ENCODE measurements at regions of chr9 and their contacts with region 1.

Region 1: GRCh38 chr9:125631391-125632085 is 75.5 kb downstream of the MAPKAP1 start:
- DNase-seq: no peak
- H3K4me3 Mint-ChIP-seq: peak overlapping the region; percentile 11
- H3K27ac Mint-ChIP-seq: peak overlapping the region; percentile 40
- H3K4me1 Mint-ChIP-seq: peaks cover 57% of the 10 kb centered on the region
- H3K27me3 Mint-ChIP-seq: no peaks in the 10 kb centered on the region

Region 2: DNA sequence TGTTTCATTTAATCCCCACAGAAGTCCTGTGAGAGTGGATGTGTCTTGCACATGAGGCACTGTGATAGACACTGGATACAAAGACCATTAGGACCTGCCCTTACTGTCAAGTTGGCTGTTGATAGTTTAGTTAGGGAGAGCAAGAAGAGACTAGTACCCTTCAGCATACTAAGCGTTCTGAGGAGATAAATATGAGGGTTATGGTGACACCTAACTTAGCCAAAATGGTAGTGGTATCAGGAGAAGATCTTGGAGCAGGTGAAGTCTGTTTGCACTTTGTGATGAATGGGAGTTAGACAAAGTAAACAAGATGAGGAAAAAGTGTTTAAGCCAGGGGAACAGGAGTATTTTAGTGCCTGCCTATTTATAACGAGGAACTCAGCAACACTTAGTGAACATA is 322.9 kb before region 1 on chr9:
- intact Hi-C with region 1: no loop called
- DNase-seq: no peak
- H3K4me3 Mint-ChIP-seq: no peak overlapping the region
- H3K27ac Mint-ChIP-seq: no peak overlapping the region
- H3K4me1 Mint-ChIP-seq: no peaks in the 10 kb centered on the region
- H3K27me3 Mint-ChIP-seq: no peaks in the 10 kb centered on the region

Region 3: GRCh38 chr9:125521462-125522327 is 109.8 kb before region 1 on chr9:
- intact Hi-C with region 1: loop called (anchors 1 kb)
- DNase-seq: peak; percentile 24
- H3K4me3 Mint-ChIP-seq: peak overlapping the region; percentile 51
- H3K27ac Mint-ChIP-seq: peak overlapping the region; percentile 91
- H3K4me1 Mint-ChIP-seq: peaks cover 50% of the 10 kb centered on the region
- H3K27me3 Mint-ChIP-seq: no peaks in the 10 kb centered on the region

Region 4: DNA sequence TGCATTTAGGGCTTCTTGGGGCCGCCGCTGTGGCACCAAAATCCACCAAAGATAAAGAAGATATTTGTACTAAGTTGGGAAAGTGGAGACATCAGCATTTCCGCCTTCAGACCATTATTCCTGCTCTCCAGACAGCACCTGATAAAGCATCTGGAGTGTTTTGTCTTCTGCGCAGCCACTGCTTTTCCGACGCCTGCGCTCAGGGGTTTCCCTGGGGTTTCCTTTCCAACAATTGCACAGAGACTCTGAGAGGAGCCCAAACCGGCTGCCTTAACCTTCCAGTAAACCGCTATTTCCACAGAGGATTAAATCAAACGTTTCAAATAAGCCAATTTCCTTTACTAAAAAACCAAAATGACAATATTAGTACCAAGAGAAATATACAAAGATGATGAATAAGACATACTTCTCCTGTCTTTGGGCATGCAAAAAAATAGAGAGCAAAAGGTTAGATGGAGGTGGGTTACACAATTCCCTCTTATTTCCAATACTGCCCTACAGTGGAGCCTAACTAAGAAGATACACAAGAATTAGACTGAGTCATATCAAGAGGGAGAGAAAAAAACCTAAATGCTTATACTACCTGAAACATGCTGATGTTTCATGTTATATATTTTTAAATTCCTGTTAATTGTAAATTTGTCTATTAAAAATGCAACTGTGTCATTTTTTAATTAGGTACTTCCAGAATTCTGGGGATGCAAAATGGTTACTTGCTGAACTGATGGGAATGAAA is 22.9 kb before region 1 on chr9:
- intact Hi-C with region 1: loop called (anchors 1 kb)
- DNase-seq: no peak
- H3K4me3 Mint-ChIP-seq: no peak overlapping the region
- H3K27ac Mint-ChIP-seq: peak overlapping the region; percentile 74
- H3K4me1 Mint-ChIP-seq: peaks cover 41% of the 10 kb centered on the region
- H3K27me3 Mint-ChIP-seq: no peaks in the 10 kb centered on the region

Region 5: DNA sequence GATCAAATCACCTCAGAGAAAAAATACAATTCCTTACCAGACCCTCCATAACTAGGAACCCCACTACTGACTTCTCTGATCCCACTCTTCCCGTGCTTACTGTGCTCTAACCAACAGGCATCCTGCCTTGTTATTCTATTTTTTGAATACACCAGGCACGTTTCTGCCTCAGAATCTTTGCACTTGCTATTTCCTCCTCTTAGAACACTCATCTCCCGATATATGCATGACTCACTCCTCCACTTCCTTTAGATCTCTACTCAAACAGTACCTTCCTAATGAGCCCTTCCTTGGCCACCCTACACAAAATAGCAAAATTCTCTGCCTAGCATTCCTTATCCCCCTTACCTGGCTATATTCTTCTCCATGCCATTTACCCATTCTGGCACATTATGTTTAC is 31.6 kb after region 1 on chr9:
- intact Hi-C with region 1: loop called (anchors 1 kb)
- DNase-seq: no peak
- H3K4me3 Mint-ChIP-seq: no peak overlapping the region
- H3K27ac Mint-ChIP-seq: no peak overlapping the region
- H3K4me1 Mint-ChIP-seq: peaks cover 11% of the 10 kb centered on the region
- H3K27me3 Mint-ChIP-seq: no peaks in the 10 kb centered on the region

Region 6: DNA sequence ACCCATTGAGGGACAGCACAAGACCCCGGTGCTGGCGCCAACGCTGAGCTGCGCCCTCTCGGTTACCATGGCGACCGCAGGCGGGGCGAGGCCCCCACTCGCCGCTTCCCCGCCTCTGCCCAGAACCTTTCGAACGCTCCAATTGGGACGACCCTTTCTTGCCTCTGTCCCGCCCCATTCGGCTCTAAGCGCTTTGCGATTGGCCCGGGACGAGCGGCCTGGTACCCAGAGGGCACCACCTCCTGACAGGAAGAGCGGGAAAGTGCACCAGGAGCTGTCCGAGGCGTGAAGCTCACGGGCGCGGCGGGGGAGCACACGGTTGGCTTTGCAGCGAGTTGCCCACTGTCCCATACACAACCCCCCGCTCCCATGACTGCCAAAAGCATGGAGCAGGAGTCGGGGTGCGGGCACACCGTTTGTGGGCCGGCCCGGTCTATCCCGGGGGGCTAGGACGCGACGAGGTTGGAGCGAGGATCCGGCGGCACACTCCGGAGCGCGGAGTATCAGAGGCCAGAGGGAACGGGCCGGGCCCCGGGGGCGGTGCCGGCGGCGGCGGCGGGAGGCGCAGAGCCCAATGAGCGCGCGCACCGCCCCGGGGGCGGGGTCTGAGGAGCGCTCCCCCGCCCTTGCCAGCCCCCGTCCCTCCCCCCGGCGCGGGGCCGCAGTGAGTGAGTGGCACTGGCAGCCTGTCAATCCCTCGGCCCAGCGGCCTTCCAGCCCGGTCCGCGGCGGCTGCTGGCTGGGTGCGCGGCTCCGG is 114.7 kb after region 1 on chr9:
- intact Hi-C with region 1: loop called (anchors 2 kb)
- DNase-seq: peak; percentile 88
- H3K4me3 Mint-ChIP-seq: peak overlapping the region; percentile 80
- H3K27ac Mint-ChIP-seq: peak overlapping the region; percentile 95
- H3K4me1 Mint-ChIP-seq: peaks cover 40% of the 10 kb centered on the region
- H3K27me3 Mint-ChIP-seq: peaks cover 28% of the 10 kb centered on the region

Region 7: DNA sequence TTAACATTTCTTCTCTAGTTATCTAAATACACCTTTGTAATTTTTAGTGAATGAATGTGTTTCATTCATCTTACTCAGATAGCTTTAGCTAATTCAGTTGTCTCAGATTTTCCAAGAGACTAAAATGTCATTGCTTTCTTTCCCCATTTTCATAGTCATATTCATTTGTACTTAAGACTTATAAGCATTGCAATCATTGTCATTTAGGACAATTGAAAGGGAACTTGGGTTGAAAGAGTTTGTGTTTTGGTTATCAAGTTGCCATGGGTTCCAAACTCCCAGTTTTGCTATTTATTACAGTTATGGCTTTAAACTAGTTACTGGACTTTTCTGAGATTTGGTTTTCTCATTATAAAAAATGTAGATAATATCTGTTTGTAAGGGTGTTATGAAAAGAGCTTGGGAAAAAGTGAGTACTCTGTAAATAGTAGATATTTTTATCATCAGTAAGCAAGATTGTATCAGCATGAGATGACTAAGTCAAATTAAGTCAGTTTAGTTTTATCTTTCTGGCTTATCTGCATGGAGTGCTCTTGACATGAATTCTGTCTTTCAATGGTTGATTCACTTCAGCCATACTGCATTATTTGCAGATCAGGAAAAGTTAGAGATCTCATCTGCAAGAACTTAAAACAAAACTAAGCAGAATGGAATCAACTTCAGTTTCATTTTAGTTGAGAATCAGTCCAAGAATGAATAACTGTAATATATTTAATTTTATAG is 223.2 kb after region 1 on chr9:
- intact Hi-C with region 1: loop called (anchors 1 kb)
- DNase-seq: no peak
- H3K4me3 Mint-ChIP-seq: no peak overlapping the region
- H3K27ac Mint-ChIP-seq: peak overlapping the region; percentile 55
- H3K4me1 Mint-ChIP-seq: peaks cover 22% of the 10 kb centered on the region
- H3K27me3 Mint-ChIP-seq: no peaks in the 10 kb centered on the region

Measured in activated T-helper 2 cell treated with anti-CD3 and anti-CD28 coated beads, Interferon-gamma antibody, Interleukin-2, Interleukin-4, amounts not matched to agents 10 μg/mL and 5 μg/mL and 100 μg/mL, durations not matched to agents 14 hours and 24 hours and 36 hours (primary cell).